Posterior vena cava (tissue), 2 donors: ENCODE measurements at regions of chr12 and their contacts with region 1.

Region 1: GRCh38 chr12:108689314-108690190 is 41.8 kb downstream of the CORO1C start:
- DNase-seq: no peak

Region 2: GRCh38 chr12:108701779-108702441 is 12.4 kb after region 1 on chr12:
- intact Hi-C with region 1: no loop called
- DNase-seq: no peak

Region 3: DNA sequence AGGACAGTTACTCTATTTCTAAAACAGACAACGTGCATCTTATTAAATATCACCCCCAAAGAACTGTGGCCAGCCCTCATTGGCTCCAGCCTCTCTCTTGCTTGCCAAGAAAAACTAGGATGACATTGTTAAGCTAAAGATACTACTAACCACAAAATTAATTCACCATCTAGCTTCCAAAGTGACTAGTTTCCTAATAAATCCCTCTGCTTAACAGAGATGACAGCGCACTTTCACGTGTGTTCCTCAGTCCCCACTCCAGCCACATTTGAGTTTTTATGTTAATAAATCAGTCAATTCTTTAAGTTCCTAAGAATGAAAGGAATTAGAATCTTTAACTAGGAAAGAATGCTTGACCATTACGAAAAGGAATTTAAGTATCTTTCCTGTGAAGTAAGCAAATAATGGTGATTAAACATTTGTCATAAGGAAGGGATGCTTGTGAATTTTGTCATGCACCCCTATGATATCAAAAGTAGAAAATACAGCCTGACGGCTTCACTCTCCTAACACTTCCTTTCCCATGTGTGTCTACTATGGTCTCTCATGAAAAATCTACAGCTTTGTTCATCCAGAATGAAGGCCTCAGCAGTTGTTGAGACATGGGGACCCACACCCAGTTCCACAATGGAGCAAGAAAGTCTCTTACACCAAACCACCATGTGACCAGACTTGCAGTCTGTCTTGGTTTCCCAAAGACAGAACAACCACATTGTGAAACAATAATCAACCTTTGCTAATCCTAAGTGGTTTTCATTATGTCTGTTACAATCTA is 33.6 kb after region 1 on chr12:
- intact Hi-C with region 1: loop called (anchors 1 to 5 kb)
- DNase-seq: no peak

Region 4: DNA sequence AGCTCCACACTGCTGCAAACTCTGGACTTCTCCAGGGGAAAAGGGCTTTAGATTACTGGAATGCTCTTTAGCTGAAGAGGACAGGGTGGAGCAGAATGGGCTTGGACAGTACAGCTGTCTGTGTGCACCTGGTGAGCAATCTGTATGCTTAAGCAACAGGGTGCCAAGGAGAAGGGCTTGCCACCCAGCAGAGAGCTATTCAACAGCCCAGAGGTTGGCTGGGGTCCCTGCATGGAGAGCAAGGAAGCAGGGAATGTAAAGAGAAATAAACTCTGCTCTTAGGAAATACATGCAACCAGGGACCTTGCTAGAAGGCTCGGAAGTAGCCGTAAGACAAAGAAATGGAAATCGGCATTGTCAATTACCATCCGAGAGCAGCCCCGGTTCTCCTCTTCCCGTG is 94.7 kb after region 1 on chr12:
- intact Hi-C with region 1: no loop called
- DNase-seq: no peak